ENCODE measurements at regions of chr5 and their contacts with region 1.

Region 1: GRCh38 chr5:72402959-72403628 is 82.9 kb downstream of the PTCD2 start:
- DNase-seq: no peak
- H3K4me3 ChIP-seq: no peak overlapping the region
- H3K27ac ChIP-seq: peak overlapping the region; percentile 76
- H3K4me1 ChIP-seq: peaks cover 17% of the 10 kb centered on the region
- H3K27me3 ChIP-seq: no peaks in the 10 kb centered on the region
- CTCF ChIP-seq: peak; percentile 63 to 64

Region 2: GRCh38 chr5:72336781-72337553 is 66.1 kb before region 1 on chr5:
- CTCF ChIA-PET with region 1: no interaction called
- dilution Hi-C with region 1: loop called (anchors 5 kb)
- in situ Hi-C with region 1: no loop called
- intact Hi-C with region 1: no loop called
- DNase-seq: no peak
- H3K4me3 ChIP-seq: no peak overlapping the region
- H3K27ac ChIP-seq: no peak overlapping the region
- H3K4me1 ChIP-seq: no peaks in the 10 kb centered on the region
- H3K27me3 ChIP-seq: no peaks in the 10 kb centered on the region
- CTCF ChIP-seq: no peak